ENCODE measurements at regions of chr1 and their contacts with region 1.

Region 1: DNA sequence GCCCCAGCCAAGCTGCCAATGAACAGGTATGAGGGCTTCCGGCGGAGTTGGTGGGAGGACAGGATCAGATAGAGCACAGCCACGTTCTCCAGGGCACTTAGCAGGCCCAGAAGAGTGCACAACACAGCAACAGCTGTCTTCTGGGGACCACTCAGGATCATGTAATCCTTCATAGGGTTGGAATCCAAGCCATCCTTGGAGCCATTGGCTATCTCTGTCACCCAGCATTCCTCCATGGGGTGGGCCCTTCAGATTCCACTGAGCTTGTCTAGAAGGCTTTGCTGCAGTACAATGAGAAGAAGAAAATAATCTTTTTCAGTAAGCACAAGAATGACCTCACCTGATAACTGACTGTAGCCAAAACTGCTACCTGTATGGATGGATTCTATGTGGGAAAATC is 7.3 kb upstream of the FUCA1 start:
- DNase-seq: no peak
- H3K4me3 ChIP-seq: no peak overlapping the region
- H3K27ac ChIP-seq: no peak overlapping the region
- H3K4me1 ChIP-seq: no peaks in the 10 kb centered on the region
- H3K27me3 ChIP-seq: no peaks in the 10 kb centered on the region
- CTCF ChIP-seq: no peak
- EP300 ChIP-seq: no peak
- POLR2A ChIP-seq: no peak

Region 2: DNA sequence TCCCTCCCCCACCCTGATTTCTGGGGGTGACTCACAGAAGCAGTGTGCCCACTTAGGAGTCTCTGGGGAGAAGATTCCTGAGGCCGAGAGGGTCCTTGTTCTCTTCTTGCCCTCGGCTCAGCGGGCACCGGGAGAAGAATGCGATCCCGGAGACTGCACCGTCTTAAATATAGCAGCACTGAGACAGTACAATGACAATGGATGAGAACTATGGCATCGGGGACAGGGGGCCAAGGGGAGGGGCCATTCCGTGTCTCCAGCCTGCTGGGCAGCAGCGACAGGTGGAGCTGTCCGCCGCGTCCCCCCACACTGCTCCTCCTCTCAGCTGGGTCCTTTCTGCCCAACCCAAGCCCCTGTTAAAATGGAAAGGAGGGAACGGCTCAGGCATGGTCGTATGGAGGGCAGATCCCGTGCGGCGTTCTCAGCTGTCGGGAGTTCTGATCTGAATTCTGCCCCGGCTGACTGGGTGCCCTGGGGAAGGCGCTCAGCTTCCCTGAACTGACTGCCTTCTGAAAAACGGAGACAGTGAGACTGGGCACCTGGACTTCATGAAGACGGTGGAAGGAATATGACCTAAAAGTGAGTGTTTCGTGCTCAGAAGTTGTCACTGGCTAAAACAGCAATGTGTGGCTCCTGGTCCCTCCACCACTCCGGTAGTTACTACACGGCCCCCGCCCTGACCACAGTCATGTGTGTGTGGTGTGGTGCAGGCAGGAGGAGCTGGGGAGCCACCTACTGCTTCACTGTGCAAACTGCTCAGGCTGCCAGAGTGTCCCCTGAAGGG is 236.8 kb after region 1 on chr1 and contains the start of gene MYOM3:
- intact Hi-C with region 1: loop called in 1 of 4 experiments (anchors 10 kb)
- DNase-seq: peak; percentile 58 to 73 (median 72)
- H3K4me3 ChIP-seq: no peak within 1 kb of the TSS
- H3K27ac ChIP-seq: no peak within 1 kb of the TSS
- H3K4me1 ChIP-seq: no peaks in the 10 kb centered on the region
- H3K27me3 ChIP-seq: no peaks in the 10 kb centered on the region
- CTCF ChIP-seq: peak; percentile 41 to 46 (median 44)
- EP300 ChIP-seq: no peak
- POLR2A ChIP-seq: no peak
- total RNA-seq, gene MYOM3: 0.08 to 0.60 (median 0.27) TPM